ENCODE measurements at regions of chr12 and their contacts with region 1.

Region 1: GRCh38 chr12:1939801-1940607 is 21.6 kb upstream of the CACNA2D4 start:
- DNase-seq: peak; percentile 92 to 97
- ATAC-seq: peak; percentile 92
- H3K4me3 ChIP-seq: no peak overlapping the region
- H3K27ac ChIP-seq: no peak overlapping the region
- H3K4me1 ChIP-seq: no peaks in the 10 kb centered on the region
- H3K27me3 ChIP-seq: no peaks in the 10 kb centered on the region

Region 2: DNA sequence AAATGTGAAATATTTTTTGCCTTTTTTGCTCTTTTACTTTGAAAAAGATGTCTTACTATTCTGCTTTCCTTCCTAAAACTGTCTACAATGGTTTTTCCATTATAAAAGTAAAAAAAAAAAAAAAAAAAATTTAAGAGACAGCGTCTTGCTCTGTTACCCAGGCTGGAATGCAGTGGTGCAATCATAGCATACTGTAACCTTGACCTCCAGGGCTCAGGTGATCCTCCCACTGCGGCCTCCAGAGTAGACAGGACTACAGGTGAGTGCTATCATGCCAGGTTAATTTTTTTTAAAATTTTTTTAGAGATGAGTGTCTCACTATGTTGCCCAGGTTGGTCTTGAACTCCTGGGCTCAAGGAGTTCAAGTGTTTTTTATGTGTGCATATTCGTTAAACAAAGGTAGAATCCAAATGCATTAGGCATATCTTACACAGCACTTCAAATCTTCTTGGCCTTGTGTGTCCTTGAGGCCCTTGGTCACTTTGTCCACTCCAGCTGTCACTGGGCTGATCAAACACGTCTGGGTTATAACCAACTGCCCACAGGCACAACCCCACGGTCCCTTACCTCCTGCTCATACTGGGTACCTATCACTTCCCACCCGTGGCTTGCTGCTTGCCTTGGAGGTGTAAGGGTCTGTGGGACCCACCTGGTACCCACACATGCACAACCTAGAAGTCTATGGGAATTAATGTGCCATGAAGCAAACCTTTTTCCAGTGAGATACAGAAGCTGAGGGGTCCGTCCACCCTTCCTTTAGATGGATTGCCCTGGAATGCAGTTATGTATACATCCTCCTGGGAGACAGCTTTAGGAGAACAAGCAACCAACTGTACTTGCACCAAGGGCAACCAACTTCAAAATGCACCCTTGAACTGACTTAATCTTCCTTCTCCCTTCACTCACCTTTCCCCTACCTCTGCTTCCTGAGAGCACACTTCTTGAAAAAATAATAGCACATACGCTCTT is 1003.3 kb before region 1 on chr12:
- intact Hi-C with region 1: no loop called
- DNase-seq: peak in 1 of 2 donors; percentile 64
- ATAC-seq: no peak
- H3K4me3 ChIP-seq: no peak overlapping the region
- H3K27ac ChIP-seq: no peak overlapping the region
- H3K4me1 ChIP-seq: no peaks in the 10 kb centered on the region
- H3K27me3 ChIP-seq: no peaks in the 10 kb centered on the region

Region 3: GRCh38 chr12:1634590-1635191 is 305.3 kb before region 1 on chr12:
- intact Hi-C with region 1: loop called in 1 of 2 experiments (anchors 5 kb)
- DNase-seq: peak; percentile 89 to 93
- ATAC-seq: peak; percentile 77
- H3K4me3 ChIP-seq: no peak overlapping the region
- H3K27ac ChIP-seq: no peak overlapping the region
- H3K4me1 ChIP-seq: no peaks in the 10 kb centered on the region
- H3K27me3 ChIP-seq: no peaks in the 10 kb centered on the region

Region 4: GRCh38 chr12:1650260-1650977 is 289.6 kb before region 1 on chr12:
- intact Hi-C with region 1: loop called in 1 of 2 experiments (anchors 5 kb)
- DNase-seq: no peak
- ATAC-seq: no peak
- H3K4me3 ChIP-seq: no peak overlapping the region
- H3K27ac ChIP-seq: no peak overlapping the region
- H3K4me1 ChIP-seq: no peaks in the 10 kb centered on the region
- H3K27me3 ChIP-seq: no peaks in the 10 kb centered on the region

Region 5: GRCh38 chr12:1661553-1662335 is 278.3 kb before region 1 on chr12:
- intact Hi-C with region 1: loop called in 1 of 2 experiments (anchors 5 kb)
- DNase-seq: peak; percentile 97 to 98
- ATAC-seq: peak; percentile 94
- H3K4me3 ChIP-seq: peak overlapping the region in 1 of 2 donors; percentile 11
- H3K27ac ChIP-seq: peak overlapping the region in 1 of 2 donors; percentile 98
- H3K4me1 ChIP-seq: peaks cover 0 to under 1% of the 10 kb centered on the region in 2 donors
- H3K27me3 ChIP-seq: no peaks in the 10 kb centered on the region

Region 6: GRCh38 chr12:1795785-1796514 is 144.1 kb before region 1 on chr12:
- intact Hi-C with region 1: loop called (anchors 1 kb)
- DNase-seq: peak; percentile 97 to 98
- ATAC-seq: peak; percentile 96
- H3K4me3 ChIP-seq: peak overlapping the region; percentile 29
- H3K27ac ChIP-seq: no peak overlapping the region
- H3K4me1 ChIP-seq: no peaks in the 10 kb centered on the region
- H3K27me3 ChIP-seq: no peaks in the 10 kb centered on the region

Region 7: GRCh38 chr12:2034633-2035430 is 94.8 kb after region 1 on chr12:
- intact Hi-C with region 1: loop called in 1 of 2 experiments (anchors 5 kb)
- DNase-seq: peak; percentile 92 to 98
- ATAC-seq: peak; percentile 95
- H3K4me3 ChIP-seq: no peak overlapping the region
- H3K27ac ChIP-seq: no peak overlapping the region
- H3K4me1 ChIP-seq: no peaks in the 10 kb centered on the region
- H3K27me3 ChIP-seq: no peaks in the 10 kb centered on the region